Right cardiac atrium (tissue), 5 donors: ENCODE measurements at regions of chr18 and their contacts with region 1.

Region 1: DNA sequence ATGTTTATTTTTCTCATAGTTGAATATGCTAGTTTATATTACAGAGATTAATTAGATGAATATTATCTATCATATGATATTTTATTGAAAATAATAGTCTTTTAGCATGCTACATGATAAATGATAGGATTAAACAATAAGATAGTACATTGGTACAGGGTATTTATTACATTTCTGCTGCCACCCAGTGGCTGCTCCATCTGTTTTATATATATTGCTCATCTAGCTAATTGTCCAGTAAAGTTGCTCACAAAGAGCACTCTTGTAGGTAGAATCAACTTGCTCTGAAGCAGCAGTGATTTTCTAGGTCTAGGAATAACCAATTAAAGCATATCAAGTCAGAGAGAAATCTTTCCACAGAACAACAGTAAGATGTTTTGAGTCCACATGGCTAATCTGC is 183.3 kb downstream of the ASXL3 start:
- DNase-seq: peak in 2 of 3 donors; percentile 18 to 56
- ATAC-seq: no peak
- H3K4me3 ChIP-seq: no peak overlapping the region
- H3K27ac ChIP-seq: no peak overlapping the region
- H3K4me1 ChIP-seq: no peaks in the 10 kb centered on the region
- H3K27me3 ChIP-seq: no peaks in the 10 kb centered on the region

Region 2: GRCh38 chr18:33432857-33433256 is 328.5 kb before region 1 on chr18:
- intact Hi-C with region 1: loop called in 1 of 4 experiments (anchors 10 kb)
- DNase-seq: no peak
- ATAC-seq: no peak
- H3K4me3 ChIP-seq: no peak overlapping the region
- H3K27ac ChIP-seq: no peak overlapping the region
- H3K4me1 ChIP-seq: no peaks in the 10 kb centered on the region
- H3K27me3 ChIP-seq: no peaks in the 10 kb centered on the region

Region 3: DNA sequence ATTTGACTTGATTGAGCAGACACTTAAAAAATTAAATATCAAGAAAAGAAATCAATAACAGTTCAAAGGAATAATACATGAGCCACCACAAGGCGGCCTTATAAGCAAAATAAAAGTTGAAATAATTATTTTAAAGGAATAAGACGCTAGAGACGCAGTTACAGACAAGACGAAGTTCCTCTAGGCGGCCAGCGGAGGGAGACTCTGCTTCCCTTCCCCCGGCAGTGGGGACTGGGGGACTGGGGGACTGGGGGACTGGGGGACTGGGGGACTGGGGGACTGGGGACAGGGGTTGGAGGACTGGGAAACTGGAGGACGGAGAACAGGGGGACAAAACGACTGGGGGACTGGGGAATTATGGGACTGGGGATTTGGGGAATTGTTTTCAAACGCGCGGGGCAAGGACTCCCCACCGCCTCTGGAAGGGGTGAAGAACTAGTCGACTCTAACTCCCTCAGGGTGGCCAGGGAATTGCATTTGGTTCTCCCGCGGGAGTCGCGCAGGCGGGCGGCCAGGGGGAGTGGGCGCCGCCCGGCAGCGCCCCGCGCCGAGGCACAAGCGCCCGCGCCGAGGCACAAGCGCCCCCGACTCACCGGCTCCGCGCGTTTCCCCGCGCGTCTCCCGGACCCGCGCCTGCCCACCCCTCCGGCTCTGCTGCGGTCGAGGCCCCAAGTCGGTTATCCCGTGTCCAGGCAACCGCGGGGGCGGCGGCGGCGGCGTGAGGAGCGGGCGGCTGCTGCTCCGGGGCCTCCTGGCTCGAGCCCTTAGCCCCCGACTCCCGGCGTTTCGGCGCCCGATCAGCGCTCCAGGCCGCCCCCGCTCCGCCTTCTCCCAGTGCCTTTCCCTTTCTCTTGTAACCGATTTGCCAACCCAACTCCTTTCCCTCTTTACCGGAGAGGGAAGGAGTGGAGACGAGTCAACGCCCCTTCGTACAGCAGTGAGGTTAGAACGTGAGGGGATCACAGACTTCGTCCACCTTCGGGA is 321.0 kb before region 1 on chr18 and contains the start of gene CCDC178:
- intact Hi-C with region 1: loop called in 2 of 4 experiments (anchors 5 to 10 kb)
- DNase-seq: peak; percentile 57 to 74 (median 70)
- ATAC-seq: peak; percentile 81 to 85
- H3K4me3 ChIP-seq: peak within 1 kb of the TSS; percentile 91
- H3K27ac ChIP-seq: no peak within 1 kb of the TSS
- H3K4me1 ChIP-seq: no peaks in the 10 kb centered on the region
- H3K27me3 ChIP-seq: no peaks in the 10 kb centered on the region
- total RNA-seq, gene CCDC178: 0.14 to 0.29 TPM in 2 of 4 donors, not detected in the others

Region 4: DNA sequence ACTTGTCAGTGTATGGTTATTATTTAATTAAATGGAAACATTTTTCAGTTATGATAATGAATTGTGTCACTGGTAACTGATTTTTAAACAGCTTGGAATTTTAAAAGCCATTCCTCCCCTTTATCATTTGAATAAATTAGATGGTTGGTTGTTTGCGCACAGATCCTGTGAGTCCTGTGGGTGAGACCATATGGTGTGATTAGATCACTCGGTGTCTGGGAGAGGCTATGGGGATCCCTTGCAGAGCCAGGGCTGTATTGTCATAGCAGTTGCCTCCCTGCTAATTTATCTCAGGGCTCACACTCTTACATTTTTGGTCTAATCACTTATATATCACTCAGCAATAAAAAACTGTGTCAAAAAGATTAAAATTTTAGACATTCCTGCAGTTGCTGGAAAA is 49.8 kb before region 1 on chr18:
- intact Hi-C with region 1: no loop called
- DNase-seq: no peak
- ATAC-seq: no peak
- H3K4me3 ChIP-seq: no peak overlapping the region
- H3K27ac ChIP-seq: no peak overlapping the region
- H3K4me1 ChIP-seq: no peaks in the 10 kb centered on the region
- H3K27me3 ChIP-seq: no peaks in the 10 kb centered on the region